CD14-positive monocyte (primary cell): ENCODE measurements at regions of chr11 and their contacts with region 1.

Region 1: GRCh38 chr11:6682936-6683861 is at the start of gene MRPL17:
- DNase-seq: peak; percentile 99
- H3K4me3 ChIP-seq: peak within 1 kb of the TSS; percentile 64 to 96 (median 95)
- H3K4me3 Mint-ChIP-seq: peak within 1 kb of the TSS; percentile 97 to 99
- H3K27ac ChIP-seq: peak within 1 kb of the TSS; percentile 85 to 93
- H3K27ac Mint-ChIP-seq: peak within 1 kb of the TSS; percentile 88 to 99 (median 98)
- H3K4me1 ChIP-seq: peaks cover 16 to 19% of the 10 kb centered on the region in 2 donors
- H3K4me1 Mint-ChIP-seq: peaks cover 18% of the 10 kb centered on the region
- H3K27me3 ChIP-seq: no peaks in the 10 kb centered on the region
- H3K27me3 Mint-ChIP-seq: peaks cover 1 to 6% (median 6%) of the 10 kb centered on the region in 3 donors
- CTCF ChIP-seq: peak; percentile 83
- polyA plus RNA-seq, gene MRPL17: 8.0 to 14.0 (median 12.8) TPM

Region 2: GRCh38 chr11:6234387-6235107 is 448.7 kb before region 1 on chr11 and contains the start of gene FHIP1B:
- intact Hi-C with region 1: loop called in 1 of 2 experiments (anchors 10 kb)
- DNase-seq: peak; percentile 99 to 100 (median 100)
- H3K4me3 ChIP-seq: peak within 1 kb of the TSS; percentile 81 to 94 (median 87)
- H3K4me3 Mint-ChIP-seq: peak within 1 kb of the TSS; percentile 97 to 100
- H3K27ac ChIP-seq: peak within 1 kb of the TSS; percentile 84 to 97
- H3K27ac Mint-ChIP-seq: peak within 1 kb of the TSS; percentile 98 to 100 (median 98)
- H3K4me1 ChIP-seq: peaks cover 49 to 72% of the 10 kb centered on the region in 2 donors
- H3K4me1 Mint-ChIP-seq: peaks cover 48% of the 10 kb centered on the region
- H3K27me3 ChIP-seq: no peaks in the 10 kb centered on the region
- H3K27me3 Mint-ChIP-seq: peaks cover 0 to 1% (median 0%) of the 10 kb centered on the region in 3 donors
- CTCF ChIP-seq: no peak
- polyA plus RNA-seq, gene FHIP1B: 14.2 to 64.1 (median 18.9) TPM

Region 3: GRCh38 chr11:6531267-6531752 is 151.9 kb before region 1 on chr11:
- intact Hi-C with region 1: loop called in 1 of 2 experiments (anchors 10 kb)
- DNase-seq: peak; percentile 25 to 48 (median 46)
- H3K4me3 ChIP-seq: no peak overlapping the region
- H3K4me3 Mint-ChIP-seq: no peak overlapping the region
- H3K27ac ChIP-seq: no peak overlapping the region
- H3K27ac Mint-ChIP-seq: no peak overlapping the region
- H3K4me1 ChIP-seq: no peaks in the 10 kb centered on the region
- H3K4me1 Mint-ChIP-seq: peaks cover 4% of the 10 kb centered on the region
- H3K27me3 ChIP-seq: no peaks in the 10 kb centered on the region
- H3K27me3 Mint-ChIP-seq: no peaks in the 10 kb centered on the region
- CTCF ChIP-seq: peak; percentile 90